ENCODE measurements at regions of chr14 and their contacts with region 1.

Region 1: DNA sequence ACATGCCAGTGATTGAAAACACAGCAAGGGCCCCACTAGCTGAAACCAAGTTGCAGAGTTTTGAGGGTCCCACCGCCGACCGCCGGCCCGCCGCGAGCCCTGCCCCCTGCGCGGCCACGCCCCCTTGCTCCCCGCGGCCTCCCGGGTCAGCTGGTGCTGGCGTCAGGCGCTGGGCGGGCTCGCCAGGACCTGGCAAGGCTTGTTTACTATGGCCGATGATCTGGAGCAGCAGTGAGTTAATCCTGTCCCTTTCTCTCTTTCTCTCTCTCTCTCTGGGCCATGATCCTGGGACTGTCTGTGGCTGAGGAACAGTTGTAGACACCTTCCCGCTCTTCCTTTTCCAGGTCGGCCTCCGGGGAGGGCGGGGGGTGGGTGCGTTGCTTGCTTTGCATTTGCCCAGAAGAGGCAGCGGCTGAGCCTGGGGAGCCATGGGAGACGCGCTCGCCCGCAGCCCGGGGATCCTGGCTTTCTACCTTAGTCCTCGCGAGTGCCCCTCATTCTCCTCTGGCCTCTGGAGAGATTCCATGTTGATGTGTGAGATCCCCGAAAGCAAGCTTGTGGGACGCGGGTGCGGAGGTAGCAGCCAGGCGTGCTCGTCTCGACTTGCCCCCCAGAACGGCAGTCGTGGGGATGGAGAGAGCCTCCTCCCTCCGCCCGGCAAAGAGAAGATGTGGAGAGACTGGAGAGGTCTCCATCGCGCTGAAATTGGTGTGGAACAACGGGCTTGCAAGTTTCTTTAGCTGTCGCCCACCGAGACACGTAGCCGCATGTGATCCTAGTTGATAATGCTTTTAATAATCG is at the start of gene ABHD4:
- DNase-seq: peak; percentile 60
- H3K4me3 Mint-ChIP-seq: peak within 1 kb of the TSS; percentile 97
- H3K27ac Mint-ChIP-seq: peak within 1 kb of the TSS; percentile 88
- H3K4me1 Mint-ChIP-seq: peaks cover 15% of the 10 kb centered on the region
- H3K27me3 Mint-ChIP-seq: peaks cover 26% of the 10 kb centered on the region
- CTCF ChIP-seq: no peak
- total RNA-seq, gene ABHD4: 10.3 and 16.7 TPM in 2 replicates

Region 2: GRCh38 chr14:22400655-22401259 is 197.5 kb before region 1 on chr14:
- CTCF ChIA-PET with region 1: no interaction called
- POLR2A ChIA-PET with region 1: no interaction called
- intact Hi-C with region 1: no loop called
- DNase-seq: no peak
- H3K4me3 Mint-ChIP-seq: no peak overlapping the region
- H3K27ac Mint-ChIP-seq: no peak overlapping the region
- H3K4me1 Mint-ChIP-seq: no peaks in the 10 kb centered on the region
- H3K27me3 Mint-ChIP-seq: peaks cover 55% of the 10 kb centered on the region
- CTCF ChIP-seq: no peak

Region 3: DNA sequence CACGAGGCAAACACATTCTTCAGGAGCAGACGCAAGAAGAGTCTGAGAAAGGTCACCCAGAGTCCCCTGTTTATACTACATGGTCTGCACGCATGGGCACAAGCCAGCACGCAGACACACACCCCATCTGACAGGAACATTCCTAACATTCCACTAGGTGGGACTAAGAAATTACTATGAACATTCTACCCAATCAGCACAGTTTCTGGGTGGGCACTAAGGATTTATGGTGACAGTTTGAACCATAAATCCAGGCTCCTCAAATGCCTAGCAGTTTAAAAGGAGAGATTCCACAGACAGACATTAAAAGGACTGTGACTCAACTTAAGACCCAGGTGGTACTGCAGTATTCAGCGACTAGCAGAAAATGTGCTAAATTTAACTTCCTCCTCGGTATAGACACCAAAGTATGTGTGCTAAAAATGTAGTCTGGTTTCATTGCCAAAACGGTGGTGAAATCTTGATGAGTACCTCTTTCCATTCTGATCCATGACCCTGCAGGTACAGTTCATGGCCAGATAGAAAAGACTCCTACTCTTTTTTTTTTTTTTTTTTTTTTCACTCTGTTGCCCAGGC is 16.0 kb after region 1 on chr14:
- CTCF ChIA-PET with region 1: interaction called, 26 read pairs
- POLR2A ChIA-PET with region 1: interaction called, 14 read pairs
- intact Hi-C with region 1: no loop called
- DNase-seq: peak; percentile 91
- H3K4me3 Mint-ChIP-seq: no peak overlapping the region
- H3K27ac Mint-ChIP-seq: peak overlapping the region; percentile 63
- H3K4me1 Mint-ChIP-seq: peaks cover 20% of the 10 kb centered on the region
- H3K27me3 Mint-ChIP-seq: no peaks in the 10 kb centered on the region
- CTCF ChIP-seq: no peak